Sigmoid colon (tissue), 7 donors: ENCODE measurements at regions of chr6 and their contacts with region 1.

Region 1: GRCh38 chr6:29705389-29706231 is 17.6 kb upstream of the HLA-F start:
- DNase-seq: no peak
- H3K4me3 ChIP-seq: no peak overlapping the region
- H3K27ac ChIP-seq: no peak overlapping the region
- H3K4me1 ChIP-seq: no peaks in the 10 kb centered on the region
- H3K27me3 ChIP-seq: peaks cover 0 to 24% (median 0%) of the 10 kb centered on the region in 3 donors
- CTCF ChIP-seq: peak; percentile 36 to 63 (median 48)
- EP300 ChIP-seq: no peak
- POLR2A ChIP-seq: no peak

Region 2: GRCh38 chr6:29834564-29835436 is 129.2 kb after region 1 on chr6:
- intact Hi-C with region 1: loop called (anchors 1 kb)
- DNase-seq: no peak
- H3K4me3 ChIP-seq: no peak overlapping the region
- H3K27ac ChIP-seq: no peak overlapping the region
- H3K4me1 ChIP-seq: no peaks in the 10 kb centered on the region
- H3K27me3 ChIP-seq: peaks cover 0 to 51% (median 6%) of the 10 kb centered on the region in 3 donors
- CTCF ChIP-seq: peak in 3 of 4 experiments; percentile 48 to 79 (median 63)
- EP300 ChIP-seq: no peak
- POLR2A ChIP-seq: no peak